ENCODE measurements at regions of chr22 and their contacts with region 1.

Region 1: GRCh38 chr22:22207845-22208564 is 36.6 kb upstream of the VPREB1 start:
- DNase-seq: peak; percentile 66
- H3K4me3 ChIP-seq: no peak overlapping the region
- H3K27ac ChIP-seq: no peak overlapping the region
- H3K4me1 ChIP-seq: peaks cover 25% of the 10 kb centered on the region
- H3K27me3 ChIP-seq: no peaks in the 10 kb centered on the region
- CTCF ChIP-seq: peak; percentile 80 to 86

Region 2: DNA sequence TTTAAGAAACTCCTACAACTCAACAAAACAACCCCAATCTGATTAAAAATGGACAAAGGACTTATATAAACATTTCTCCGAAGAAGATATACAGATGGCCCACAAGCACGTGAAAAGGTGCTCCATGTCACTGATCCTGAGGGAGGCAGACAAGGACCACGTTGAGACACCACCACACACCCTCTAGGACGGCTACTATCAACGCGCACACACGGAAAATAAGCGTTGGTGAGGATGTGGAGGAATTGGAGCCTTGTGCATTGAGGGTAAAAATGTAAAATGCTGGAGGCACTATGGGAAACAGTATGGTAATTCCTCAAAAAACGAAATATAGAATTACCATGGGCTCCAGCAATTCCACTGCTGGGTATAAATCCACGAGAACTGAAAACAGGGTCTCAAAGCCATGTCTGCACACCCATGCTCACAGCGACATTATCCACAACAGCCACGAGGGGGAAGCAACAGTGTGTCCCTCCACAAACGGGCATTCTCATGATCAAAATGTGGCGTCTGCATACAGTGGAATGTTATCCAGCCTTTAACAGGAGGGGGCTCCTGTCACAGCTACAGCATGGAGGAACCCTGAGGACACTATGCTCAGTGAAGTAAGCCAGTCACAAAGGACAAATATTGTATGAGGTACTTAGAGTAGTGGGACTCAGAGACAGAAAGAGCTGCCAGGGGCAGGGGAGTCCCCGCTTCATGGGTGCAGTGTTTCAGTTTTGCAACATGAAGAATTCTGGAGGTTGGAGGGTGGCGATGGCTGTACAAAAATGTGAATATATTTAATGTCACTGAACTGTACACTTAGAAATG is 494.9 kb before region 1 on chr22:
- CTCF ChIA-PET with region 1: no interaction called
- dilution Hi-C with region 1: no loop called
- in situ Hi-C with region 1: no loop called
- intact Hi-C with region 1: loop called (anchors 5 kb)
- DNase-seq: peak; percentile 59
- H3K4me3 ChIP-seq: no peak overlapping the region
- H3K27ac ChIP-seq: no peak overlapping the region
- H3K4me1 ChIP-seq: peaks cover 3% of the 10 kb centered on the region
- H3K27me3 ChIP-seq: no peaks in the 10 kb centered on the region
- CTCF ChIP-seq: peak; percentile 74 to 77

Region 3: GRCh38 chr22:21927174-21927823 is 280.7 kb before region 1 on chr22:
- CTCF ChIA-PET with region 1: no interaction called
- dilution Hi-C with region 1: no loop called
- in situ Hi-C with region 1: no loop called
- intact Hi-C with region 1: no loop called
- DNase-seq: no peak
- H3K4me3 ChIP-seq: no peak overlapping the region
- H3K27ac ChIP-seq: no peak overlapping the region
- H3K4me1 ChIP-seq: no peaks in the 10 kb centered on the region
- H3K27me3 ChIP-seq: no peaks in the 10 kb centered on the region
- CTCF ChIP-seq: no peak

Region 4: GRCh38 chr22:22110548-22111266 is 97.3 kb before region 1 on chr22:
- CTCF ChIA-PET with region 1: no interaction called
- dilution Hi-C with region 1: no loop called
- in situ Hi-C with region 1: no loop called
- intact Hi-C with region 1: loop called (anchors 1 kb)
- DNase-seq: peak; percentile 93
- H3K4me3 ChIP-seq: no peak overlapping the region
- H3K27ac ChIP-seq: peak overlapping the region; percentile 82
- H3K4me1 ChIP-seq: peaks cover 18% of the 10 kb centered on the region
- H3K27me3 ChIP-seq: no peaks in the 10 kb centered on the region
- CTCF ChIP-seq: peak; percentile 79 to 87

Region 5: DNA sequence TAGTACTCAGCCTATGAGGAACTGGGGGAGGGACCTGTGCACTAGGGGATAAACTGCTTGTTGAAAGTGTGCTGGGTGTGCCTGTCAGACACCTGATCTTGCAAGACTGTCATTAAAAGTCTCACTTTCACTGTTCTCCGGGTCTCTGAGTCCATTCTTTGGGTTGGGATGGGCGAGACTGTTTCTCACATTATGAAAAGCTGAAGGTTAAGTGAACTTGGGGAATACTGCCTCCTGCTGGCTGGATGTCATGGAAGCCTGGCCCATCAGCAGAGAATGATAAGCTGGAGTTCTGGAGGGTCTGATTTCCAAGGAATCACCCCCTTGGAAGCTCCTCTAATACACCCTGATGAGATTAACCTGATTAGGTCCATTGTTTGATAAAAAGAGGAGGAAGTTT is 27.6 kb after region 1 on chr22:
- CTCF ChIA-PET with region 1: interaction called, 11 read pairs
- dilution Hi-C with region 1: loop called (anchors 5 kb)
- in situ Hi-C with region 1: no loop called
- intact Hi-C with region 1: loop called (anchors 1 kb)
- DNase-seq: peak; percentile 9
- H3K4me3 ChIP-seq: no peak overlapping the region
- H3K27ac ChIP-seq: no peak overlapping the region
- H3K4me1 ChIP-seq: no peaks in the 10 kb centered on the region
- H3K27me3 ChIP-seq: no peaks in the 10 kb centered on the region
- CTCF ChIP-seq: peak; percentile 62 to 75

Region 6: DNA sequence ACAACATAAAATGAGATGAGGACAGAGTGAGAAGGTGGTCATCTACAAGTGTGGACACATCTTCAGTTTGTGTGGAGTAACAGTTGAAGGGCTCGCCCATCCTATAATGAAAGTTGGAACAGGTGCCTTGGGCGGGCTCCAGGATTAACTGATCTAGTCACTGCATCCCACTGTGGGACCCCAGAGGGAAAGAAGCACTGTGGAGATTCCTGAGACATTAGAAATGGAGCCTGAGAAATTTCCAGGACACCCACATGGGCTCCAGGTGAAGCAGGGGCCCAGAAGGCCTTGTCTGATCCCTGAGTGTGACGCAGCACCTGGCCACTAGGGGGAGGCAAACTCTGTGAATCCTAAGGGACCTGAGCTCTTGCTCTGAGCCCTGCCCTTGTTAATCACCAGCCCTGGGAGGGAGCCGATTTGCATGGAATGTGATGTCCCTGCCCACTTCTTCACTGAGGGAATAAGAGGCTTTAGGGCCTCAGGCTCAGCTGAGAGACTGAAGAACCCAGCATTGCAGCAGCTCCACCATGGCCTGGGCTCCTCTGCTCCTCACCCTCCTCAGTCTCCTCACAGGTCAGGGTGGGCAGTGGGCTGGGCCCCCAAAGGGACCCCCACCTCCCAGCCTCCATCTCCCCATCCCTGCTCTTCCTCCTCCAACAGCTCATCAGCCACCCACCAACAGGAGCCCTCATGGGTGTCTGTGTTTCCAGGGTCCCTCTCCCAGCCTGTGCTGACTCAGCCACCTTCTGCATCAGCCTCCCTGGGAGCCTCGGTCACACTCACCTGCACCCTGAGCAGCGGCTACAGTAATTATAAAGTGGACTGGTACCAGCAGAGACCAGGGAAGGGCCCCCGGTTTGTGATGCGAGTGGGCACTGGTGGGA is 134.9 kb after region 1 on chr22:
- CTCF ChIA-PET with region 1: no interaction called
- dilution Hi-C with region 1: no loop called
- in situ Hi-C with region 1: no loop called
- intact Hi-C with region 1: loop called (anchors 1 kb)
- DNase-seq: peak; percentile 70
- H3K4me3 ChIP-seq: no peak overlapping the region
- H3K27ac ChIP-seq: no peak overlapping the region
- H3K4me1 ChIP-seq: no peaks in the 10 kb centered on the region
- H3K27me3 ChIP-seq: no peaks in the 10 kb centered on the region
- CTCF ChIP-seq: peak; percentile 95 to 96

Region 7: DNA sequence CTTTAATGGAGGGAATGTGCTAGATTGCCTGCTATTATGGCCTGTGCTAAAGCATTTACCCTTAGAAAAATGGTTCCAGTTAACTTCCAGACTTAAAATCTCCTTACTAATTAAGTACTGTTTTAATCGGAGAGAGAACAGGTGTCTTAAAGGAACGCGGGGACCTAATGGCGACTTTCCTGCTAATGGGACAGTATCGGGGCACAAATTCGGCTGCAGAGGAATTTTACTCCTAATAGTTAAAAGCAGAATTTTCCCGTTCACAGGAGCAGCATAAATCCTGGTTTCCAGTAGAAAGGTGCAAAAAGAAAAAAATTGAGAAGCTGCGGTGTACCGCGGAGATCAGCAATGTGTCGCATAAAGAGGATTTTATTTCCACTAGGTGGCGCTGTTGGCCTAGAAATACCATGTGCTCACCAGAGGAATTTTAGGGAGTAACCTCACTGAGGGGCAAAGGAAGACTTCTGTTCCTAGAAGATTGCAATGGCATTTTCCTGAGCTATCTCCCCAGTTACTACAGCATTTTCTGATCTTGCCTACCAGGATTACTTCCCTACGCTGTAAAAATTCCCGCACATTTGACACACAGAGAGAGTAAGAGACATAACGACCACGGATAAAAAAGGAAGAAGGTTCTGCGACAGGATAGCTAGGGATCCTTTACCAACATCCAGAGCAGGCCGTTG is 256.0 kb after region 1 on chr22:
- CTCF ChIA-PET with region 1: no interaction called
- dilution Hi-C with region 1: no loop called
- in situ Hi-C with region 1: no loop called
- intact Hi-C with region 1: loop called (anchors 2 kb)
- DNase-seq: peak; percentile 25
- H3K4me3 ChIP-seq: no peak overlapping the region
- H3K27ac ChIP-seq: no peak overlapping the region
- H3K4me1 ChIP-seq: no peaks in the 10 kb centered on the region
- H3K27me3 ChIP-seq: no peaks in the 10 kb centered on the region
- CTCF ChIP-seq: peak; percentile 45 to 62

Measured in mammary epithelial cell (primary cell).